Vagina (tissue), 2 donors: ENCODE measurements at regions of chr11 and their contacts with region 1.

Region 1: DNA sequence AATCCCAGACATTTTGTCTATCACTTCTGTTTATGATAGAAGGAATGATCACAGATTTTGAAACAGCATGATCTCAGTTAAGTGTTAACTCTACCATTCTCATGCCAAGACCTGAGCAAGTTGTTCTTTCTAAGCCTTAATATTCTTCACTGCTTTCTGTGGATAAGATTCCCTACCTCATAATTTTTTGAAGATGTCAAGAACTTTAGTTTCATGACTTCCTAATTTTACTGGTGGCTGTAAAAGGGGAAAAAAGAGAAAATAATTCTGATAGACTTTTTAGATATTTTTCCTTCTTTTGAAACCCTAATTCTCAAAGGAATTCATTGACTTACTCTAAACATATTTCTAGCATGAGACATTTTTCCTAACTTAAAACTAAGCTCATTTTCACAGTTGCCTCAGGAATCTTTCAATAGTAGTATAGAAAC is 520.0 kb upstream of the LUZP2 start:
- DNase-seq: no peak
- H3K4me3 ChIP-seq: no peak overlapping the region
- H3K27ac ChIP-seq: no peak overlapping the region
- H3K4me1 ChIP-seq: no peaks in the 10 kb centered on the region
- H3K27me3 ChIP-seq: no peaks in the 10 kb centered on the region
- CTCF ChIP-seq: no peak
- POLR2A ChIP-seq: no peak

Region 2: DNA sequence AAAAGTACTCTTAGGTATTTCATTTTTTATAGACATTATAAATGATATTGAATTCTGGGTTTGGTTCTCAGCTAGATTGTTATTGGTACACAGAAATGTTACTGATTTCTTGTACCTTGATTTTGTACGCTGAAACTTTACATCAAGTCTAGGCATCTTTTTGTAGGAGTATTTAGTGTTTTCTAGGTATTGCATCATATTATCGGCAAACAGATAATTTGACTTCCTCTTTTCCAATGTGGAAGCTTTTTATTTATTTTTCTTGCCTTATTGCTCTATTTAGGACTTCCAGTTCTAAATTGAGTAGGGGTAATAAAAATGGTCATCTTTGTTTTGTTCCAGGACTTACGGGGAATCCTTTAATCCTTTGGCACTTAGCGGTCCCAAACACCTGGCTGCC is 439.9 kb before region 1 on chr11:
- intact Hi-C with region 1: no loop called
- DNase-seq: no peak
- H3K4me3 ChIP-seq: no peak overlapping the region
- H3K27ac ChIP-seq: no peak overlapping the region
- H3K4me1 ChIP-seq: no peaks in the 10 kb centered on the region
- H3K27me3 ChIP-seq: no peaks in the 10 kb centered on the region
- CTCF ChIP-seq: no peak
- POLR2A ChIP-seq: no peak

Region 3: GRCh38 chr11:25838918-25839611 is 1862.2 kb after region 1 on chr11:
- intact Hi-C with region 1: loop called (anchors 10 kb)
- DNase-seq: no peak
- H3K4me3 ChIP-seq: no peak overlapping the region
- H3K27ac ChIP-seq: no peak overlapping the region
- H3K4me1 ChIP-seq: no peaks in the 10 kb centered on the region
- H3K27me3 ChIP-seq: no peaks in the 10 kb centered on the region
- CTCF ChIP-seq: no peak
- POLR2A ChIP-seq: no peak